Posterior vena cava (tissue), 2 donors: ENCODE measurements at regions of chr9 and their contacts with region 1.

Region 1: DNA sequence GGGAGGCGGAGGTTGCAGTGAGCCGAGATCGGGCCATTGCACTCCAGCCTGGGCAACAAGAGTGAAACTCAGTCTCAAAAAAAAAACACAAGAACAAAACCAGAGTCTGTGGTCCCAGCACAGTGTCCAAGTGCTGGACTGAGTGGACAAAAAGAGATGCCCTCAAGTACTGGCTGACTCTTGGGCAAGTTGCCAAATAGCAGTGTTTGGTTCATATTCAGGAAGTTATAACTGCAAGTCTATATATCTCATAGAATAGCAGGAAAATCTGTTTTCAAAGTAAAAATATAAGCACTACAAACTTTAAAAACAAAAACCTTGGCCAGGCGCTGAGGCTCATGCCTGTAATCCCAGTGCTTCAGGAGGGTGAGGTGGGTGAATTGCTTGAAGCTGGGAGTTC is 7.3 kb downstream of the HABP4 start:
- DNase-seq: no peak

Region 2: DNA sequence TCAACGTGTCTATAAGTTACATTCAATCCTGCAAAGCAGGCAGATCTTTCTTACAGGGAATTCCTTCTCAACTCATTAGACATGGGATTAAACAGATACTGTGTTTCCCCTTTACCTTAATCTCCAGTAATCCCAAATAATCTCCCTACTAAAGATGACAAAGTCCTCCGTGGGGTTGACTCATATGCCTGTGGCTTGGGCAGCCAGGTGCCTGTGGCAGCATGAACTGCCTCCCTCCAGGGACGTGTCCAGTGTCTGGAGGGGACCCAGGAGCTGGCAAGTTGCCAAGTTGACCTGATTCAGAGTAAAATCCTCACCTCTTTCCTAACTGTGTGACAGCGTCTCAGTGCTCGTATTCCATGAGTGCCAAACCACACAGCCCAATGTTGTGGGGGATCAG is 845.9 kb before region 1 on chr9:
- intact Hi-C with region 1: loop called in 1 of 2 experiments (anchors 5 kb)
- DNase-seq: peak; percentile 46